OCI-LY7 (cell line): ENCODE measurements at regions of chr11 and their contacts with region 1.

Region 1: GRCh38 chr11:71928737-71929452 is at the start of gene RNF121:
- DNase-seq: peak; percentile 97
- H3K4me3 ChIP-seq: peak within 1 kb of the TSS; percentile 88
- H3K27ac ChIP-seq: peak within 1 kb of the TSS; percentile 76
- H3K4me1 ChIP-seq: peaks cover 31% of the 10 kb centered on the region
- CTCF ChIP-seq: no peak
- total RNA-seq, gene RNF121: 17.6 and 24.6 TPM in 2 replicates

Region 2: GRCh38 chr11:71787098-71787823 is 141.6 kb before region 1 on chr11:
- CTCF ChIA-PET with region 1: no interaction called
- POLR2A ChIA-PET with region 1: no interaction called
- intact Hi-C with region 1: loop called (anchors 1 kb)
- DNase-seq: peak; percentile 96
- H3K4me3 ChIP-seq: peak overlapping the region; percentile 85
- H3K27ac ChIP-seq: peak overlapping the region; percentile 70
- H3K4me1 ChIP-seq: peaks cover 27% of the 10 kb centered on the region
- CTCF ChIP-seq: no peak